ENCODE measurements at regions of chr2 and their contacts with region 1.

Region 1: DNA sequence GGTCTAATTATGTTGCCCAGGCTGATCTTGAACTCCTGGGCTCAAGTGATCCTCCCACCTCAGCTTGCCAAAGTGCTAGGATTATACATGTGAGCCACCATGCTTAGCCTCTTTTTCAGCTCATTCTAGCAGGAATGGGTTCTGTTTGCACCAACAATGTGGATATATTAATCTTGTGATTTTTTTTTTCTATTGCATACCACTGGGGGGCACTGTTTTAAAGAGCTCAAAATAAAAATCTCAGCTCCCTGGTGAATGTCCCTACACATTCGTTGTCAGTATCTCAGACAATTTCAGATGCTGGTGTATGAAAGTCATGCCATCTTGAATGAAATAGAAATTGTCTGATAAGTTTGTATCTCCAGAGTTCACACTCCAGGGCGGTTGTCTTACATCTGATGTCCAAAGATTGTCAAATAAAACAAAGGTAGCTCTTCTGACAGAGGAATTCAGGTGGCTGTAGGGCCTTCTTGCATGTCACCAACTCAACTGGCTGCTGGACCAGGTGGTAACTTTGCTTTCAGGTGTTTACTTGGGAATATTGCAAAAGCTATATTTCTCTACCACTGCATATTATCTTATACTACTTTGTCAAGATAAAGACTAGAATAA is 3.1 kb upstream of the MATN3 start:
- DNase-seq: no peak
- H3K4me3 Mint-ChIP-seq: no peak overlapping the region
- H3K27ac Mint-ChIP-seq: no peak overlapping the region
- H3K4me1 Mint-ChIP-seq: peaks cover 6% of the 10 kb centered on the region
- H3K27me3 Mint-ChIP-seq: peaks cover 22% of the 10 kb centered on the region

Region 2: GRCh38 chr2:19754907-19755306 is 260.7 kb before region 1 on chr2:
- CTCF ChIA-PET with region 1: no interaction called
- POLR2A ChIA-PET with region 1: no interaction called
- intact Hi-C with region 1: no loop called
- DNase-seq: no peak
- H3K4me3 Mint-ChIP-seq: no peak overlapping the region
- H3K27ac Mint-ChIP-seq: no peak overlapping the region
- H3K4me1 Mint-ChIP-seq: no peaks in the 10 kb centered on the region
- H3K27me3 Mint-ChIP-seq: peaks cover 6% of the 10 kb centered on the region

Region 3: DNA sequence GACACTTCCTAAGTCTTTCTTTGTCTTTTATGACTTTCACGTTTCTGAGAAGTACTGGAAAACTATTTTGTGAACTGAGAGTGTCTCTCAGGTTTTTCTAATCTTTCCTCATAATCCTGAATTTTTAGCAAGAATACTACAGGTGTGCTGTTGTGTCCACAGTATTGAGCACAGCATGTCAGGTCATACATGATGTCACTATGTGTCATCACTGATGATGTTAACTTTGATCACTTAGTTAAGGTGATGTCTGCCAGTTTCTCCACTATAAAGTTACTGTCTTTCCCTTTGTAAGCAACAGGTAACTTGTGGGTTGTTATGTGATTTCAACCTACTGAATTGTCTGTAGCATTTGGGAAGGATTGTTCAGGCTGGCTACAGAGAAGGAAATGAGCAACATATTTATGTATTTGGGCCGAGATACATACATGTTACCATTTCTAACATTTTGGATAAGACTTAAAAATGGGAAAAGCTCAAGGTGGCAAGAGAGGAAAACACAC is 14.2 kb before region 1 on chr2:
- CTCF ChIA-PET with region 1: interaction called, 10 read pairs
- POLR2A ChIA-PET with region 1: no interaction called
- intact Hi-C with region 1: no loop called
- DNase-seq: no peak
- H3K4me3 Mint-ChIP-seq: no peak overlapping the region
- H3K27ac Mint-ChIP-seq: no peak overlapping the region
- H3K4me1 Mint-ChIP-seq: no peaks in the 10 kb centered on the region
- H3K27me3 Mint-ChIP-seq: peaks cover 8% of the 10 kb centered on the region

Region 4: GRCh38 chr2:20044778-20045177 is 29.2 kb after region 1 on chr2:
- CTCF ChIA-PET with region 1: interaction called, 13 read pairs
- POLR2A ChIA-PET with region 1: no interaction called
- intact Hi-C with region 1: no loop called
- DNase-seq: no peak
- H3K4me3 Mint-ChIP-seq: no peak overlapping the region
- H3K27ac Mint-ChIP-seq: no peak overlapping the region
- H3K4me1 Mint-ChIP-seq: peaks cover 27% of the 10 kb centered on the region
- H3K27me3 Mint-ChIP-seq: no peaks in the 10 kb centered on the region

Region 5: DNA sequence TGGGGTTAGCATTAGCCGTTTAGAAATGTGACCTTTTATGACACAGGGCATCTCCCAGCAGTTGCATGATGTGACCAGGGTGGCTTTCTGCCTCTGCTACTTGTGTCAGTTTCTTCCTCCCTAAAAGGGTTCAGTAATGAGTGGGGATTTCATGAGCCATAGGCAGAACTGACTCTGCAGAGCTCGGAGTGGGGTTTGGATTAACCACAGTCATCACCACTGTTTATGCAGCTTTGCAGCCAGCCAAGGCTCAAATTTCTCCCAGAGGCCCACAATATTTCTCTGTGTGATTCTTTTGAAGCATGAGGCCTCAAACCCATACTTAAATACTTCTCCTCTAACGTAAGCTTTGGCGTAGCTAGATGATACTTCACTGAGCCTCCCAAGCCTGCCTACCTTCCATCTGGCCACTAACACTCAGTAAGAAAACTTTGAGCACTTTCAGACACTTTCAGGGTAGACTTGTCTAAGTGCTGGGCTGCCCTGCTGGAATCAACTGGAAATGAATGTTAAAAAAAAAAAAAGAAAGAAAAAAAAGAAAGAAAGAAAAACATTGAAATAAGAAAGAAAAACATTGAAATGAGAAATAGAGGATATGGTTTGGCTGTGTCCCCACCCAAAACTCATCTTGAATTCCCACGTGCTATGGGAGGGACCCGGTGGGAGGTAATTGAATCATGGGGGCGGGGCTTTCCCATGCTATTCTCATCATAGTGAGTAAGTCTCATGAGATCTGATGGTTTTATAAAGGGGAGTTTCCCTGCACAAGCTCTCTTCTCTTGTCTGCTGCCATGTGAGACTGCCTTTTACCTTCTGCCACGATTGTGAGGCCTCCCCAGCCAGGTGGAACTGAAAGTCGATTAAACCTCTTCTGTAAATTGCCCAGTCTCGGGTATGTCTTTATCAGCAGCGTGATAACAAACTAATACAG is 47.3 kb after region 1 on chr2:
- CTCF ChIA-PET with region 1: interaction called, 11 read pairs
- POLR2A ChIA-PET with region 1: no interaction called
- intact Hi-C with region 1: no loop called
- DNase-seq: peak; percentile 38
- H3K4me3 Mint-ChIP-seq: no peak overlapping the region
- H3K27ac Mint-ChIP-seq: no peak overlapping the region
- H3K4me1 Mint-ChIP-seq: no peaks in the 10 kb centered on the region
- H3K27me3 Mint-ChIP-seq: peaks cover 4% of the 10 kb centered on the region

Region 6: GRCh38 chr2:20225294-20226151 is 209.9 kb after region 1 on chr2:
- CTCF ChIA-PET with region 1: interaction called, 6 read pairs
- POLR2A ChIA-PET with region 1: no interaction called
- intact Hi-C with region 1: loop called (anchors 10 kb)
- DNase-seq: peak; percentile 51
- H3K4me3 Mint-ChIP-seq: peak overlapping the region; percentile 48
- H3K27ac Mint-ChIP-seq: no peak overlapping the region
- H3K4me1 Mint-ChIP-seq: peaks cover 6% of the 10 kb centered on the region
- H3K27me3 Mint-ChIP-seq: peaks cover 41% of the 10 kb centered on the region

Measured in activated CD4-positive, alpha-beta memory T cell treated with anti-CD3 and anti-CD28 coated beads for 36 hours (primary cell).